HCT116 (cell line): ENCODE measurements at regions of chr1 and their contacts with region 1.

Region 1: GRCh38 chr1:220733090-220733601 is 15.0 kb upstream of the MTARC2 start:
- DNase-seq: peak; percentile 76
- ATAC-seq: peak; percentile 89
- H3K4me3 ChIP-seq: peak overlapping the region; percentile 17 to 35
- H3K27ac ChIP-seq: peak overlapping the region; percentile 35; the same call in 1 of the 2 replicates
- H3K4me1 ChIP-seq: peaks cover 11 to 27% of the 10 kb centered on the region in 2 experiments
- H3K27me3 ChIP-seq: no peaks in the 10 kb centered on the region
- CTCF ChIP-seq: peak; percentile 85 to 92 (median 89)
- POLR2A ChIP-seq: no peak
- RAD21 ChIP-seq: peak; percentile 91

Region 2: GRCh38 chr1:220281159-220281574 is 452.0 kb before region 1 on chr1:
- CTCF ChIA-PET with region 1: interaction called, 25 read pairs
- POLR2A ChIA-PET with region 1: no interaction called
- RAD21 ChIA-PET with region 1: no interaction called
- intact Hi-C with region 1: loop called (anchors 1 kb)
- DNase-seq: peak; percentile 24
- ATAC-seq: peak; percentile 83
- H3K4me3 ChIP-seq: no peak overlapping the region
- H3K27ac ChIP-seq: no peak overlapping the region
- H3K4me1 ChIP-seq: no peaks in the 10 kb centered on the region
- H3K27me3 ChIP-seq: no peaks in the 10 kb centered on the region
- CTCF ChIP-seq: peak; percentile 55 to 73 (median 65)
- POLR2A ChIP-seq: no peak
- RAD21 ChIP-seq: peak; percentile 87

Region 3: GRCh38 chr1:220294846-220295301 is 438.3 kb before region 1 on chr1:
- CTCF ChIA-PET with region 1: interaction called, 21 read pairs
- POLR2A ChIA-PET with region 1: interaction called, 3 read pairs
- RAD21 ChIA-PET with region 1: no interaction called
- intact Hi-C with region 1: loop called (anchors 1 kb)
- DNase-seq: no peak
- ATAC-seq: no peak
- H3K4me3 ChIP-seq: no peak overlapping the region
- H3K27ac ChIP-seq: no peak overlapping the region
- H3K4me1 ChIP-seq: no peaks in the 10 kb centered on the region
- H3K27me3 ChIP-seq: no peaks in the 10 kb centered on the region
- CTCF ChIP-seq: no peak
- POLR2A ChIP-seq: no peak
- RAD21 ChIP-seq: no peak

Region 4: GRCh38 chr1:220300442-220301121 is 432.6 kb before region 1 on chr1:
- CTCF ChIA-PET with region 1: interaction called, 21 read pairs
- POLR2A ChIA-PET with region 1: interaction called, 3 read pairs
- RAD21 ChIA-PET with region 1: no interaction called
- intact Hi-C with region 1: loop called (anchors 1 kb)
- DNase-seq: no peak
- ATAC-seq: no peak
- H3K4me3 ChIP-seq: no peak overlapping the region
- H3K27ac ChIP-seq: no peak overlapping the region
- H3K4me1 ChIP-seq: no peaks in the 10 kb centered on the region
- H3K27me3 ChIP-seq: no peaks in the 10 kb centered on the region
- CTCF ChIP-seq: no peak
- POLR2A ChIP-seq: no peak
- RAD21 ChIP-seq: no peak

Region 5: DNA sequence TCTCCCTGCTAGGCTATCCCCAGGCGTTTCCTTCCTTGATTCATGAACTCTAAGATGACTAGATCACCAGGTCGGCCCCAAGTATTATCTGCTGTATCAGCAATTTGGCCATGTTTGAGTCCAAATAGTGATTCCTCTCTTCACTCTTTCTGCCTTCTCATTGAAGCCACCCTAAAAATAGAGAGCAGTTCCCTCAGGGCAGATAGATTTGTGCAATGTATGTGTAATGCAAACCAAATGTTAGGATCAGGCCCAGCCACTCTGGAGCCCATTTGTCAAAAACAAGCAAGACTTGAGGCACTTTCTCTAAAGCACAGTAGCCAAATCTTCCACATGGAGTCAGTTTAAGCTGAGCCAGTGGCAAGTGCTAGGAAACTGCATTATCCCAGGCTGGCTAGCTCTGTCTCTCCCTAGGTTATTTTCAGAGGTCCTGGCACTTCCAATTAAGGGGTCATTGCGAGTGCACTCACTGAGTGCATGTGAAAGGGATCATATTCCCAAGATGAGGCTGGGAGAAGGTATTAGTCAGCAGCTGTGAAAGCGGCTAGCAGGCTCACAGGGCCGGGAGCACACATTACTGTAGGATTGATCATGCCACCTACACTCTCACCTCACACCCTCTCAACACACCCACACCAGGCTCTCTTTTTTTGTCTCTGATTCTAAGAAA is 363.0 kb before region 1 on chr1:
- CTCF ChIA-PET with region 1: interaction called, 6 read pairs
- POLR2A ChIA-PET with region 1: no interaction called
- RAD21 ChIA-PET with region 1: no interaction called
- intact Hi-C with region 1: loop called (anchors 1 kb)
- DNase-seq: peak; percentile 63
- ATAC-seq: peak; percentile 90
- H3K4me3 ChIP-seq: peak overlapping the region in 1 of 2 experiments; percentile 7; a peak in 1 of 4 replicates
- H3K27ac ChIP-seq: peak overlapping the region; percentile 7; the same call in 1 of the 2 replicates
- H3K4me1 ChIP-seq: peaks cover 13 to 37% of the 10 kb centered on the region in 2 experiments
- H3K27me3 ChIP-seq: no peaks in the 10 kb centered on the region
- CTCF ChIP-seq: no peak
- POLR2A ChIP-seq: no peak
- RAD21 ChIP-seq: no peak

Region 6: GRCh38 chr1:220631238-220631832 is 101.8 kb before region 1 on chr1:
- CTCF ChIA-PET with region 1: no interaction called
- POLR2A ChIA-PET with region 1: no interaction called
- RAD21 ChIA-PET with region 1: no interaction called
- intact Hi-C with region 1: no loop called
- DNase-seq: no peak
- ATAC-seq: no peak
- H3K4me3 ChIP-seq: no peak overlapping the region
- H3K27ac ChIP-seq: no peak overlapping the region
- H3K4me1 ChIP-seq: no peaks in the 10 kb centered on the region
- H3K27me3 ChIP-seq: no peaks in the 10 kb centered on the region
- CTCF ChIP-seq: no peak
- POLR2A ChIP-seq: no peak
- RAD21 ChIP-seq: no peak

Region 7: DNA sequence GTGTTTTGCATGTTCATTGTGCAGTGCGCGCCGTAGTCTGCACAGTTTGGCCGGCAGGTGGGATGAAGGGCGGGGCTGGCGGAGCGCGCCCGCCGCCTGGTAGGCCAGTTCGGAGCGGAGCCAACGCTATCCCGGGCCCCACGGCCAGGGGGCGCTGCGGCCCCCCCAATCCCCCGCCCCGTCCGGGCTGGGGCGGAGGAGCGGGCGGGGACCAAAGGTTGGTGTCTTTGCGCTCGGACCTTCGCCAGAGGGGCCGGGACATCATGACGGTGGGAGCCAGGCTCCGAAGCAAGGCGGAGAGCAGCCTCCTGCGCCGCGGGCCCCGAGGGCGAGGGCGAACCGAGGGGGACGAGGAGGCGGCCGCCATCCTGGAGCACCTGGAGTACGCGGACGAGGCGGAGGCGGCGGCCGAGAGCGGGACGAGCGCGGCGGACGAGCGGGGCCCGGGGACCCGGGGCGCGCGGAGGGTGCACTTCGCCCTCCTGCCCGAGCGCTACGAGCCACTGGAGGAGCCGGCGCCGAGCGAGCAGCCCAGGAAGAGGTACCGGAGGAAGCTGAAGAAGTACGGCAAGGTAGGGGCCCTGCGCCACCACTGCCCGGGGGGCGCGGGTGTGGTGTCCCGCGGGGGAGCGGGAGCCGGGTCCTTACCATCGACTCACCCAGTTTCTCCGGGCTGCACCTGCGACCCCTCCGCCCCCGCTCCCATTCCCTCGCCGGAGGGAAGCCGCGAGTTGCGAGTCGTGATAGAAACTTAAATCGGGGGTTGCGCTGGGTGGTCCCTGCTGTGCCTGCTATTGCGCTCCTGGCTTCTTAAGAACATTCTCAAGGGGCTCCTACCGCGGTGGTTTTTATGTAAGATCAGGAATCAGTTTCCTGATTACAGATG is 42.8 kb before region 1 on chr1 and contains the start of gene C1orf115:
- CTCF ChIA-PET with region 1: interaction called, 10 read pairs
- POLR2A ChIA-PET with region 1: no interaction called
- RAD21 ChIA-PET with region 1: no interaction called
- intact Hi-C with region 1: loop called (anchors 1 kb)
- DNase-seq: peak; percentile 71
- ATAC-seq: peak; percentile 92
- H3K4me3 ChIP-seq: peak within 1 kb of the TSS; percentile 75 to 84
- H3K27ac ChIP-seq: peak within 1 kb of the TSS; percentile 64; the same call in 1 of the 2 replicates
- H3K4me1 ChIP-seq: peaks cover 0 to 18% of the 10 kb centered on the region in 2 experiments; a peak in 2 of 4 replicates
- H3K27me3 ChIP-seq: no peaks in the 10 kb centered on the region
- CTCF ChIP-seq: peak; percentile 87 to 98 (median 92)
- POLR2A ChIP-seq: peak; percentile 53
- RAD21 ChIP-seq: peak; percentile 61
- total RNA-seq, gene C1orf115: 16.8 TPM

Region 8: DNA sequence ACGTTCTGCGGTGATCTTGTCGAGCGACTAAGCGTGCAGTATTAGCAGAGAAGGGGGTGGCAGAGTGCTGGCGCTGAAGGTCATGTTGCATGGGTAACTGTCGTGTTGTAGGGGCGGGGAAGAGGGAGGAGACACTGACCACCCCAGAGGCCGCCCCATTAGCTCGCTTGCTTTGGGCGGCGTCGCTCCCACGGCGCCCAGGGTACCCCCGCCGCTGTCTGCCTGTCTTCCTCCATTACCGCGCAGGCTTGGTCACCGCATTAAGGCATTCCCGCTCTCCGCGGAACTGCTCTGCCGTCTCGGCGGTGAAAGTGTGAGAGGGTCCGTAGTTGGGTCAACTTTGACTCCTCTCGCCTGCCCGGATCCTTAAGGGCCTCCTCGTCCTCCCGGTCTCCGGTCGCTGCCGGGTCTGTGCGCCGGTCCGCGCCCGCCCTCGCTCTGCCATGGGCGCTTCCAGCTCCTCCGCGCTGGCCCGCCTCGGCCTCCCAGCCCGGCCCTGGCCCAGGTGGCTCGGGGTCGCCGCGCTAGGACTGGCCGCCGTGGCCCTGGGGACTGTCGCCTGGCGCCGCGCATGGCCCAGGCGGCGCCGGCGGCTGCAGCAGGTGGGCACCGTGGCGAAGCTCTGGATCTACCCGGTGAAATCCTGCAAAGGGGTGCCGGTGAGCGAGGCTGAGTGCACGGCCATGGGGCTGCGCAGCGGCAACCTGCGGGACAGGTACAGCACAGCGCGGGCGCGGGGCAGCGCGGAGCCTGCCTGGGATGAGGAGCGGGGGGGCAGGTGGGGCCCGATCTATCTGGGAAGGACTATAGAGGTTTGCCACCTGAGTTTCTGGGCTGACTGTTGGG is 15.2 kb after region 1 on chr1 and contains the start of gene MTARC2:
- CTCF ChIA-PET with region 1: interaction called, 16 read pairs
- POLR2A ChIA-PET with region 1: interaction called, 10 read pairs
- RAD21 ChIA-PET with region 1: no interaction called
- intact Hi-C with region 1: no loop called
- DNase-seq: peak; percentile 66
- ATAC-seq: peak; percentile 95
- H3K4me3 ChIP-seq: peak within 1 kb of the TSS; percentile 65 to 86
- H3K27ac ChIP-seq: peak within 1 kb of the TSS; percentile 71
- H3K4me1 ChIP-seq: peaks cover 6 to 16% of the 10 kb centered on the region in 2 experiments; a peak in 3 of 4 replicates
- H3K27me3 ChIP-seq: no peaks in the 10 kb centered on the region
- CTCF ChIP-seq: no peak
- POLR2A ChIP-seq: peak; percentile 91
- RAD21 ChIP-seq: no peak
- total RNA-seq, gene MTARC2: 16.6 TPM

Region 9: DNA sequence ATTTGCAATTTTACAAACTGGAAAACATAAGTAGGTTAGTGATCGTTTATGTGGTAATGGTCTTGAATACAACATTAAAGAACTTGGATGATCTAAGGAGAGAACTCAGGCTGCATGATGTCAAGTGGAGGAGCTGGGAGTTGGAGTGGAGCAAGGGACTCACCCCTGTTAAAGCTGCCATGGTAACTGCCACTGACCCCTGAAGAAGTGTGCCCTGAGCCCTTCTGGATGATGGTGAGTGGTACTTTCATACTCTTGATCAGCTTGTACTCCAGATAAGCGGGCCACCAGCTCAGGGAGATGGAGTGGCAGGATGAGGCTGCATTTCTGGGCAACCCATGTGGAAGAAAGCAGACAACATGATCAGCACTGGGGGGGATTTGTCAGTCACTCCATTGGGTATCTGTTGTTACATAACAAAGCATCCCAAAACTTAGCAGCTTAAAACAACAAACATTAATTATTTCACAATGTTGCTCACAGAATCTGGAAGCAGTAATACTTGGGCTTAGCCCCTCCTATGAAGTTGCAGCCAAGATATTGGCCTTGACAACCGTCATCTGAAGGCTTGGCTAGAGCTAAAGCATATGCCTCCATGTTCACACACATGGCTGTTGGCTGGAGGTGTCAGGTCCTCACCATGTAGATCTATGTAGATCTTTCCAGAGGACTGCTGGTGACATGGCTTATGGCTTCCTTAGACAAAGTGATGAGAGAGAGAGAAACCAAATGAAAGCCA is 794.9 kb after region 1 on chr1:
- CTCF ChIA-PET with region 1: no interaction called
- POLR2A ChIA-PET with region 1: no interaction called
- RAD21 ChIA-PET with region 1: no interaction called
- intact Hi-C with region 1: no loop called
- DNase-seq: no peak
- ATAC-seq: no peak
- H3K4me3 ChIP-seq: no peak overlapping the region
- H3K27ac ChIP-seq: no peak overlapping the region
- H3K4me1 ChIP-seq: no peaks in the 10 kb centered on the region
- H3K27me3 ChIP-seq: no peaks in the 10 kb centered on the region
- CTCF ChIP-seq: no peak
- POLR2A ChIP-seq: no peak
- RAD21 ChIP-seq: no peak